Heart right ventricle (tissue), 16 donors: ENCODE measurements at regions of chr2 and their contacts with region 1.

Region 1: GRCh38 chr2:172131713-172132555 is 29.2 kb upstream of the DLX2 start:
- DNase-seq: no peak
- ATAC-seq: no peak
- H3K4me3 ChIP-seq: no peak overlapping the region
- H3K27ac ChIP-seq: no peak overlapping the region
- H3K4me1 ChIP-seq: no peaks in the 10 kb centered on the region
- H3K27me3 ChIP-seq: peaks cover 0 to 19% (median 0%) of the 10 kb centered on the region in 7 donors
- CTCF ChIP-seq: no peak

Region 2: DNA sequence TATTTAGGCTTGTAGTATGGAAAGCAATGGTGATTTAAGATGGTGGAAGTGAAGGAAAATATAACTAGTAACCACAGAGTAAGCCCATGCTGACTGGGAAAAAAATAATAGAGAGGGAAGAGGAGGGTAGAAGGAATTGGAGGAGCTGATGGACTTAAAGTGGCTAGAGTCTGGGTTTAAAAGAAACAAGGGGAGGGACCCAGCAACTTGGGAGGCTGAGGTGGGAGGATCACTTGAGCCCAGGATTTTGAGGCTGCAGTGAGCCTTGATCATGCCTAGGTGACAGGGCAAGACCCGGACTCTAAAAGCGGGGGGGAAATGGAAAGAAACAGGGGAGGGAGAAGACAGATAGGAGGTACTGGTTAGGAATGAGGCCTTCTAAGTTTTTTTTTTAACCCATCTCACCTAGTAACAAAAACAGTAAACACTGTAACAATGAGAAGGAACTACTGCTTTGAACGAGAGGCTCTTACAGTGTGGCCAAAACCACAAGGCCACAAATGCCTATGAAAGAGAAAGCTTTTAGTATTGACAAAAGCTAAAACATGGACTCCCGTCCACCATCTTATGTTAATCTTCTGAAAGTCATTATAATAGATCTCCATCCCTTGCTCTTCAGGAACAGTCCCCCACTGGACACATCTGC is 724.8 kb before region 1 on chr2:
- intact Hi-C with region 1: loop called in 1 of 10 experiments (anchors 5 kb)
- DNase-seq: no peak
- ATAC-seq: no peak
- H3K4me3 ChIP-seq: no peak overlapping the region
- H3K27ac ChIP-seq: no peak overlapping the region
- H3K4me1 ChIP-seq: peaks cover 0 to 11% (median 5%) of the 10 kb centered on the region in 9 donors
- H3K27me3 ChIP-seq: no peaks in the 10 kb centered on the region
- CTCF ChIP-seq: no peak

Region 3: GRCh38 chr2:171574149-171574795 is 557.7 kb before region 1 on chr2:
- intact Hi-C with region 1: loop called in 2 of 10 experiments (anchors 10 kb)
- DNase-seq: peak; percentile 72 to 83
- ATAC-seq: peak; percentile 92 to 98 (median 96)
- H3K4me3 ChIP-seq: peak overlapping the region in 2 of 10 donors; percentile 12 to 16
- H3K27ac ChIP-seq: no peak overlapping the region
- H3K4me1 ChIP-seq: peaks cover 0 to 3% (median 0%) of the 10 kb centered on the region in 9 donors
- H3K27me3 ChIP-seq: peaks cover 0 to 11% (median 0%) of the 10 kb centered on the region in 7 donors
- CTCF ChIP-seq: peak; percentile 89 to 99 (median 98)

Region 4: DNA sequence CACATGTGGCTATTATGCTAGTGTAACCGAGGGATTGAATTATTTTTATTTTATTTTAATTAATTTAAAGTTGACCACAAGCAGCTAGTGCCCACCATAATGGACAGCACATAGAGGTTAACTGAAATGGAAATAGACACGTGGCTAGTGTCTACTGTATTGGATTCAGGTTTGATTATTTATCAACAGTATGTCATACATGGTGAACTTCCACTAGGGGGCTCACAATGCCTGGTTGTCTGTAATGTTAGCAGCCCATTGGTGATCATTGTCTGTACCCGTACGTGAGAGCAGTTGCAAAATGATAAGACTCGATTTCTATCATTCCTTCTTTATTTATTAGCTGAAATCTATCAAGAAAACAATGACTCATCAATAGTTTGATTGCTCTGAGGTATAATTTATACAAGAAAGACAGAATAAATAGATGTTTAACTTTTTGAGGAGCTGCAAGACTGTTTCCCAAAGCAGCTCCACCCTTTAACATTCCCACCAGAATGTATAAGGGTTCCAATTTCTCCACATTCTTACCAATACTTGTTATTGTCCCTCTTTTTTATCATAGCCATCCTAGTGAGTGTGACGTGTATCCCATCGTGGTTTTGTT is 533.1 kb before region 1 on chr2:
- intact Hi-C with region 1: loop called in 2 of 10 experiments (anchors 5 to 10 kb)
- DNase-seq: peak in 1 of 2 donors; percentile 34
- ATAC-seq: peak in 7 of 8 donors; percentile 55 to 84 (median 67)
- H3K4me3 ChIP-seq: no peak overlapping the region
- H3K27ac ChIP-seq: no peak overlapping the region
- H3K4me1 ChIP-seq: peaks cover 0 to 4% (median 0%) of the 10 kb centered on the region in 9 donors
- H3K27me3 ChIP-seq: peaks cover 0 to 33% (median 6%) of the 10 kb centered on the region in 7 donors
- CTCF ChIP-seq: peak; percentile 49 to 81 (median 73)

Region 5: GRCh38 chr2:171608168-171608567 is 523.8 kb before region 1 on chr2:
- intact Hi-C with region 1: loop called in 1 of 10 experiments (anchors 5 kb)
- DNase-seq: no peak
- ATAC-seq: no peak
- H3K4me3 ChIP-seq: no peak overlapping the region
- H3K27ac ChIP-seq: no peak overlapping the region
- H3K4me1 ChIP-seq: no peaks in the 10 kb centered on the region
- H3K27me3 ChIP-seq: peaks cover 0 to 46% (median 16%) of the 10 kb centered on the region in 7 donors
- CTCF ChIP-seq: no peak

Region 6: GRCh38 chr2:171787333-171788072 is 344.4 kb before region 1 on chr2:
- intact Hi-C with region 1: no loop called
- DNase-seq: no peak
- ATAC-seq: no peak
- H3K4me3 ChIP-seq: no peak overlapping the region
- H3K27ac ChIP-seq: no peak overlapping the region
- H3K4me1 ChIP-seq: no peaks in the 10 kb centered on the region
- H3K27me3 ChIP-seq: no peaks in the 10 kb centered on the region
- CTCF ChIP-seq: no peak

Region 7: GRCh38 chr2:172358691-172359556 is 227.0 kb after region 1 on chr2:
- intact Hi-C with region 1: no loop called
- DNase-seq: no peak
- ATAC-seq: peak in 5 of 8 donors; percentile 18 to 55 (median 44)
- H3K4me3 ChIP-seq: no peak overlapping the region
- H3K27ac ChIP-seq: peak overlapping the region in 7 of 10 donors; percentile 56 to 80 (median 74)
- H3K4me1 ChIP-seq: peaks cover 0 to 42% (median 26%) of the 10 kb centered on the region in 9 donors
- H3K27me3 ChIP-seq: no peaks in the 10 kb centered on the region
- CTCF ChIP-seq: no peak

Region 8: GRCh38 chr2:172394002-172394401 is 262.1 kb after region 1 on chr2:
- intact Hi-C with region 1: no loop called
- DNase-seq: no peak
- ATAC-seq: peak in 5 of 8 donors; percentile 25 to 55 (median 41)
- H3K4me3 ChIP-seq: no peak overlapping the region
- H3K27ac ChIP-seq: peak overlapping the region in 7 of 10 donors; percentile 9 to 72 (median 54)
- H3K4me1 ChIP-seq: peaks cover 5 to 87% (median 45%) of the 10 kb centered on the region in 9 donors
- H3K27me3 ChIP-seq: no peaks in the 10 kb centered on the region
- CTCF ChIP-seq: no peak

Region 9: DNA sequence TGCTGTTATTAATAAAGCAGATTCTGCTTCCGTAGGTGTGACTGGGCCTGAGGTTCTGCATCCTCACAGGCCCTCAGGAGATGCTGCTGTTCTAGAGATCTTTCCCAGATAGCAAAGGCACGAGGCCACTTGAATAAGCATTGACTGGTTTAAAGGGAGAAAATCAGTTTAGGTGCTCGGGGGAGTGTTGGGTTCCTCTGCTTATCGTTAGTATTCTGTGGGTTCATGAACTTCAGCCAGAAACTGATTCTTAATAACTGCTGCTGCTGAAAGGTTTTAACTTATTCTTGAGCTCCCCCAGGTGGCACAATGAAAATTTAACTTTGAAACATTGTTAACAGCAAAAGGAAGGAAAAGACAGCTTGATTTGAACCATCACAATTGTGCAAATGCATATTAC is 352.3 kb after region 1 on chr2:
- intact Hi-C with region 1: no loop called
- DNase-seq: no peak
- ATAC-seq: no peak
- H3K4me3 ChIP-seq: no peak overlapping the region
- H3K27ac ChIP-seq: no peak overlapping the region
- H3K4me1 ChIP-seq: peaks cover 0 to 36% (median 18%) of the 10 kb centered on the region in 9 donors
- H3K27me3 ChIP-seq: no peaks in the 10 kb centered on the region
- CTCF ChIP-seq: peak in 6 of 9 donors; percentile 25 to 50 (median 36)